Activated T-helper 1 cell treated with anti-CD3 and anti-CD28 coated beads, Interleukin-12 subunit alpha, Interleukin-12 subunit beta, Interleukin-2, Interleukin-4 antibody, amounts not matched to agents 30 ng/mL and 10 ng/mL and 1 ng/mL, durations not matched to agents 14 hours and 24 hours and 36 hours (primary cell): ENCODE measurements at regions of chr12 and their contacts with region 1.

Region 1: DNA sequence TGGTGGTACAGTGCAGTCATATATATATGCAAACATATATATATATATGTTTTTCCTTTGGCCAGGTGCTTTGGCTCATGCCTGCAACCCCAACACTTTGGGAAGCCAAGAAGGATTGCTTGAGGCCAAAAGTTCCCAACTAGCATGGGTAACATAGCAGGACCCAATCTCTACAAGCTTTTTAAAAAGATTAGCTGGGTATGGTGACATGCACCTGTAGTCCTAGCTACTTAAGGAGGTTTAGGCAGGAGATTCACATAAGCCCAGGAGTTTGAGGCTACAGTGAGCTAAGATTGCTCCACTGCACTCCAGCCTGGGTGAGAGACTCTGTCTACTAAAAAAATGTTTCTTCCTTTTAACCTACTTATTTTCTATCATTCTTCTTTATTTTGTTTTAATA is 10.2 kb downstream of the PZP start:
- DNase-seq: no peak
- H3K4me3 Mint-ChIP-seq: no peak overlapping the region
- H3K27ac Mint-ChIP-seq: no peak overlapping the region
- H3K4me1 Mint-ChIP-seq: no peaks in the 10 kb centered on the region
- H3K27me3 Mint-ChIP-seq: peaks cover 2% of the 10 kb centered on the region

Region 2: DNA sequence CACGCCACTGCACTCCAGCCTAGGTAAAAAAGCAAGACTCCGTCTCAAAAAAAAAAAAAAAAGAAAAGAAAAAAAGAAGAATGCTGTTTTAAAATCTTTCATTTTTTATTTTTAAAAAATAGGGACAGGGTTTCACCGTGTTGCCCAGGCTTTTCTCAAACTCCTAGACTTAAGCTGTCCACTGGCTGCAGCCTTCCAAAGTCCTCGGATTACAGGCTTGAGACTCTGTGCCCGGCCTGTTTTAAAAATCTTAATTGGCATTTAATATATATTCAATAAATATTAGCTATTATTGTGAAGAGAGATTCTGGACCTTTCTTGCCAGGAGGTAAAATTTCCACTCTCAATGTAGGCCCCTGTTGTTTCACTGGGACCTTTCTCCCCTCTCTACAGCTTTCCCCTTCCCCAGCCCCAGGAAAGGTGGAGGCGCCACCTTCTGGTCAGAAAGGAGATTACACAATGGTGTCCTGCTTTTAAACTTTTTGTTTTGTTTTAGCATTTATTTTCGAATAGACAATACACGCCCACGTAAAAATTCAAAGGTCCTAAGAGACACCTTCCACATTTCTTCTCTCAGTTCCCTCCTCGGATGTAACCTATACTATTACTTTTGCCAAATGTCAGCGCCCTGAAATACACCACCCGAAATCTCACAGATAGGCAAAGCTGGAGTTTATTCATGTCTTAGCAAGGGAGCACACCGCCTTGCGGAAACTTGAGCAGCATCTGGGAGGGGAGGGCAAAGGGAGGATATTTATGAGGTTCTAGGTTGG is 307.5 kb before region 1 on chr12:
- intact Hi-C with region 1: no loop called
- DNase-seq: peak; percentile 45
- H3K4me3 Mint-ChIP-seq: peak overlapping the region; percentile 72
- H3K27ac Mint-ChIP-seq: no peak overlapping the region
- H3K4me1 Mint-ChIP-seq: peaks cover 6% of the 10 kb centered on the region
- H3K27me3 Mint-ChIP-seq: peaks cover 13% of the 10 kb centered on the region

Region 3: GRCh38 chr12:9118158-9118557 is 79.9 kb before region 1 on chr12:
- intact Hi-C with region 1: no loop called
- DNase-seq: no peak
- H3K4me3 Mint-ChIP-seq: no peak overlapping the region
- H3K27ac Mint-ChIP-seq: no peak overlapping the region
- H3K4me1 Mint-ChIP-seq: peaks cover 11% of the 10 kb centered on the region
- H3K27me3 Mint-ChIP-seq: no peaks in the 10 kb centered on the region

Region 4: GRCh38 chr12:9260931-9261330 is 62.9 kb after region 1 on chr12:
- intact Hi-C with region 1: loop called (anchors 5 kb)
- DNase-seq: no peak
- H3K4me3 Mint-ChIP-seq: no peak overlapping the region
- H3K27ac Mint-ChIP-seq: no peak overlapping the region
- H3K4me1 Mint-ChIP-seq: peaks cover 5% of the 10 kb centered on the region
- H3K27me3 Mint-ChIP-seq: peaks cover 2% of the 10 kb centered on the region